Endothelial cell of umbilical vein (primary cell): ENCODE measurements at regions of chr3 and their contacts with region 1.

Region 1: GRCh38 chr3:184371570-184372018 is 6.4 kb downstream of the THPO start:
- DNase-seq: peak; percentile 92
- H3K4me3 ChIP-seq: no peak overlapping the region
- H3K27ac ChIP-seq: no peak overlapping the region
- H3K4me1 ChIP-seq: peaks cover 33% of the 10 kb centered on the region
- H3K27me3 ChIP-seq: peaks cover 7 to 10% of the 10 kb centered on the region in 2 experiments
- CTCF ChIP-seq: peak; percentile 97
- POLR2A ChIP-seq: no peak

Region 2: DNA sequence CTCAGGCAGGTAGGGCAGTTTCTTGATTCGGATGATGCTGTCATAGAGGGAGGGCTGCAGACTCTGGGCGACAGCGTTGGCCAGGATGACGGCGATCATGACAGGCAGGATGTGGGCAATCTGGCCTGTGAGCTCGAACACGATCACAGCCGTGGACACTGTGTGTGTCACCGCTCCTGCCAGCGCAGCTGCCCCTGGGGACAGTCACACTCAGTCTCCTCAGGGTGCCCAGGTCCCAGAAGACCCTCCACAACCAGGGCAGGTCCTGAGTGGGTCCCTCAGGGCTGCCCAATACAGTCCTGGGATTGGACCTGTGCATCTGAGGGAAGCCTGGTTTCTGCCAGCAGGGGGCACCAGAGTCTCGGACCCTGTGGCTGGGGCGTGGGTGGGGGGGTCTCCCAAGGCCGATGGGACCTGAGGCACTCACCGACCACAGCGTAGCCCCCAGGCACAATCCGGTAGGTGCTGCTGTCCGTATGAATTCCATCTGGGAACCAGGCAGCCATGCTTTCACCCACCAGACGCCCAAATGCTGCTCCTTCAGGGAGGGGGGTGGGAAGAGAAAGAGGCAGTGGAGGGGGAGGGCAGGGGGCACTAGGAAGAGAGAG is 17.4 kb before region 1 on chr3:
- CTCF ChIA-PET with region 1: interaction called, 11 read pairs
- POLR2A ChIA-PET with region 1: no interaction called
- dilution Hi-C with region 1: no loop called
- intact Hi-C with region 1: no loop called
- DNase-seq: peak; percentile 37
- H3K4me3 ChIP-seq: no peak overlapping the region
- H3K27ac ChIP-seq: no peak overlapping the region
- H3K4me1 ChIP-seq: no peaks in the 10 kb centered on the region
- H3K27me3 ChIP-seq: no peaks in the 10 kb centered on the region
- CTCF ChIP-seq: peak; percentile 63 to 91
- POLR2A ChIP-seq: no peak

Region 3: GRCh38 chr3:184459355-184459754 is 87.8 kb after region 1 on chr3:
- CTCF ChIA-PET with region 1: interaction called, 11 read pairs
- POLR2A ChIA-PET with region 1: interaction called, 3 read pairs
- dilution Hi-C with region 1: no loop called
- intact Hi-C with region 1: no loop called
- DNase-seq: peak; percentile 95
- H3K4me3 ChIP-seq: no peak overlapping the region
- H3K27ac ChIP-seq: peak overlapping the region; percentile 98
- H3K4me1 ChIP-seq: peaks cover 16% of the 10 kb centered on the region
- H3K27me3 ChIP-seq: no peaks in the 10 kb centered on the region
- CTCF ChIP-seq: no peak
- POLR2A ChIP-seq: peak; percentile 53

Region 4: GRCh38 chr3:184474897-184475296 is 103.3 kb after region 1 on chr3:
- CTCF ChIA-PET with region 1: interaction called, 181 read pairs
- POLR2A ChIA-PET with region 1: no interaction called
- dilution Hi-C with region 1: no loop called
- intact Hi-C with region 1: no loop called
- DNase-seq: no peak
- H3K4me3 ChIP-seq: no peak overlapping the region
- H3K27ac ChIP-seq: no peak overlapping the region
- H3K4me1 ChIP-seq: peaks cover 13% of the 10 kb centered on the region
- H3K27me3 ChIP-seq: peaks cover 28 to 29% of the 10 kb centered on the region in 2 experiments
- CTCF ChIP-seq: no peak
- POLR2A ChIP-seq: no peak

Region 5: DNA sequence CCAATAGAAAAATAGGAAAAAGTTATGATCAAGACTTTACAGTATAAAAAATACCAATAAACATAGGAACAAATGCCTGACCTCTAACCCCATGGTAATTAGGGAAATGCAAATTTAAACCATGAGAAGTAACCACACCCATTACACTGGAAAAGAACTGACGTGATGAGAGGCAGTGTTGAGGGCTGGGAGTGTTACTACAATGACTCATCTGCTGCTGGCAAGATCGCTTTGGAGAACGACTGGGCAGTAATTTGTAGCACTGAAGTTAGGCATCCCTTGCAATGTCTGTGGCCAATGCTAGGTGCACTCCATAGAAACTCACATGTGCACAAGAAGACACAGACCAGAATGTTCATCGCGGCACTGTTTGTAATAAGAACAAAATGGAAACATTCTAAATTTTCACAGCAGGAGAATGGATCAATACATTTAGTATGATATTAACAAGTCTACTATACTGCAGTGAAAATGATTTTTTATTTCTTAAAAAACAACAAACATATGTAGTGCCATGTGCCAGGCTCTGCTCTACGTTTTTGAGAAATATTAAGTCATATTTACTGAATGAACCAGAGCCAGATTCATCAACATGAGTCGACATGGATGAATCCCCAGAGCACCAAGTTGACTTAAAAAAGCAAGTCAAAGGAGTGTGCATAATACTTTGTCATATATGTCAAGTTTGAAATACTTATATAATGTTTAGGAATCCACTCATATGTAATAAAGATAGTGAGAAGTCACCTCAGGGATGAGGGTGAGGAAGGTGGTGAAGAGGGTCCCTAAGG is 152.4 kb after region 1 on chr3:
- CTCF ChIA-PET with region 1: interaction called, 13 read pairs
- POLR2A ChIA-PET with region 1: no interaction called
- dilution Hi-C with region 1: no loop called
- intact Hi-C with region 1: no loop called
- DNase-seq: peak; percentile 44
- H3K4me3 ChIP-seq: no peak overlapping the region
- H3K27ac ChIP-seq: no peak overlapping the region
- H3K4me1 ChIP-seq: peaks cover 19% of the 10 kb centered on the region
- H3K27me3 ChIP-seq: peaks cover 0 to 4% of the 10 kb centered on the region in 2 experiments
- CTCF ChIP-seq: no peak
- POLR2A ChIP-seq: no peak

Region 6: DNA sequence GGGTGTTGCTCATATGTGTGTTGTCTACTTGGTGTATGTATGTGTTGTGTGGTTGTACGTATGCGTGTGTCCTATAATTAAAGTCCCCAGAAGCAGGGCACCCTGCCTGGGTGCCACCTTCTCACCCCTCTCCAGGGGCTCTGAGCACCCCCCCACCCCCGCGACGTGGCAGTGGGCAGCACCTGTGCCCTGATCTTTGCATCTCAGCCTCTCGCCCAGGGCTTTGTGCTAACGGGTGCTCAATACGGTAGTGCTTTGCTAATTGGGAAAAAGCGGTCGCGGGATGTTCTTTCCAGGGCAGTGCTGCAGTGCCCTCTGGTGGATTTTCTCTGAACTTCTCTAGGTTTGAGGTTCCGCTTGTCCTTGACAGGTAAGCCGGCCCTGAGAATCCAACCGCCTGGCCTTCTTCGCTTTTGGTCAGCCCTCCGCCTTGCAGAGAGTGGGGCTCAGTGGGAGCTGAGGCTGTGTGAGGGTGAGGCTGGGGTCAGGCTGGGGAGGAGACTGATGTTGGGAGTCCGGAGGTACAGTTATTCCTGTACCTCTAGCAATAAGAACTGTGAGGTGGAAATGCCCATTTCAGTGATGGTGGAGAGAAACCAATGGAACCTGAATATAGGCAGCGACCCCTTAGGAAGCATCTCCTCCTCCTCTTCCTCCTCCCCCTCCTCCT is 172.4 kb after region 1 on chr3:
- CTCF ChIA-PET with region 1: interaction called, 266 read pairs
- POLR2A ChIA-PET with region 1: no interaction called
- dilution Hi-C with region 1: no loop called
- intact Hi-C with region 1: loop called (anchors 1 kb)
- DNase-seq: peak; percentile 70
- H3K4me3 ChIP-seq: no peak overlapping the region
- H3K27ac ChIP-seq: no peak overlapping the region
- H3K4me1 ChIP-seq: no peaks in the 10 kb centered on the region
- H3K27me3 ChIP-seq: peaks cover 5 to 6% of the 10 kb centered on the region in 2 experiments
- CTCF ChIP-seq: peak; percentile 69 to 85
- POLR2A ChIP-seq: no peak